H1 (cell line): ENCODE measurements at regions of chr3 and their contacts with region 1.

Region 1: DNA sequence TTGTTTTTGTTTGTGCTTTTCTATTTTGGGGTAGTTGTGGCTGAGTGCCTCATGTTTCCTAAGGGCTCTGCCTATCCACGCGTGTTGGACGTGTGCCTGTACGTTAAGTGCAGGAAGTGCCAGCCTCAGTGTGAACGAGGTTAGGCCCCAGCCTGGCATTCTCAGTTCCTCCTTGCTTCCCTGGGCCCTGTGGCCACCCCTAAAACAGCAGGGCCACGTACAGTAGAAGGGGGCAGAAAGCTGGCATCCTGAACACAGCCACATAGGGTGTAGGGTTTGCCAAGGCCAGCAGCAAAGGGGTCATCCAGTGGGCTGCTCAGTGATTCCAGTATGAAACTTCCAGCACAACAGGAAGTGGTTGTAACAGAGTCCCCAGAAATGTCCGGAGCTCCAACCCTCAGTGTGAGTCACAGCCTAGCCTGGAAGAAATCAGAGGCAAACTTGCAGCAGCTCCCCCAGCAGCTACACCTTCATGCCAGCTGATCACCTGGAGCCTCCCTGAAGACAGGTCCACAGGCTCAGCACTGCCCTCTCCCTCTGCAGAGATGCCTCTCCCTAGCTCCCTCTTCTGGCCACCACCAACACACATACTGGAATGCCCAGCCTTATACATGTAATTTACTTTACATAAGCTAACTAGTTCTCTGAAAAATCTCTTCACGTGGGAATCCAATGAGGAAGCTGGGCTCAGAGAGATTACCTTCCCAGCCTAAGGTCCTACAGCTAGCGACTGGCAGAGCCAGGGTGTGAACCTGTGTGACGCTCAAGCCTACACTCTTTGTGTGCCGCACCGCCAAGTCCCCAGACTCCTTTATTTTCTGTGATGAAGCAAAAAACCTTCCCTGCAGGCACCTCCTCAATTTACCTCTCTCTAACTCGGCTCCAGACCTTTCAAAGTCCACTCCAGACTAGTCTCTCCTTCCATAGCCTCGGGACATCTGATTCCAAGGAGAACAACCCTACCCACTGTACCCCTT is 26.6 kb downstream of the ILDR1 start:
- DNase-seq: peak; percentile 53 to 70
- H3K4me3 ChIP-seq: no peak overlapping the region
- H3K27ac ChIP-seq: no peak overlapping the region
- H3K4me1 ChIP-seq: peaks cover 0 to 8% (median 3%) of the 10 kb centered on the region in 4 experiments; a peak in 4 of 7 replicates
- H3K27me3 ChIP-seq: no peaks in the 10 kb centered on the region
- CTCF ChIP-seq: peak; percentile 79 to 94 (median 92)
- EP300 ChIP-seq: no peak
- POLR2A ChIP-seq: no peak
- RAD21 ChIP-seq: peak; percentile 84 to 87

Region 2: GRCh38 chr3:121545574-121546455 is 449.6 kb before region 1 on chr3 and contains the start of gene POLQ:
- CTCF ChIA-PET with region 1: interaction called, 13 read pairs
- POLR2A ChIA-PET with region 1: no interaction called
- DNase-seq: peak; percentile 49 to 85
- H3K4me3 ChIP-seq: peak within 1 kb of the TSS; percentile 86 to 98 (median 94)
- H3K27ac ChIP-seq: peak within 1 kb of the TSS; percentile 55
- H3K4me1 ChIP-seq: 0 out of 7 replicates have a peak, but pooled peaks cover 0 to 2% (median 0%) of the 10 kb centered on the region in 4 experiments
- H3K27me3 ChIP-seq: no peaks in the 10 kb centered on the region
- CTCF ChIP-seq: no peak
- EP300 ChIP-seq: no peak
- POLR2A ChIP-seq: peak; percentile 66 to 88
- RAD21 ChIP-seq: no peak
- total RNA-seq, gene POLQ: 15.3 and 16.1 TPM in 2 replicates

Region 3: GRCh38 chr3:121883507-121883906 is 111.9 kb before region 1 on chr3:
- CTCF ChIA-PET with region 1: interaction called, 22 read pairs
- POLR2A ChIA-PET with region 1: no interaction called
- DNase-seq: no peak
- H3K4me3 ChIP-seq: no peak overlapping the region
- H3K27ac ChIP-seq: no peak overlapping the region
- H3K4me1 ChIP-seq: no peaks in the 10 kb centered on the region
- H3K27me3 ChIP-seq: no peaks in the 10 kb centered on the region
- CTCF ChIP-seq: peak in 2 of 3 experiments; percentile 32 to 43; a peak in 2 of 4 replicates
- EP300 ChIP-seq: no peak
- POLR2A ChIP-seq: no peak
- RAD21 ChIP-seq: peak; percentile 48 to 66

Region 4: DNA sequence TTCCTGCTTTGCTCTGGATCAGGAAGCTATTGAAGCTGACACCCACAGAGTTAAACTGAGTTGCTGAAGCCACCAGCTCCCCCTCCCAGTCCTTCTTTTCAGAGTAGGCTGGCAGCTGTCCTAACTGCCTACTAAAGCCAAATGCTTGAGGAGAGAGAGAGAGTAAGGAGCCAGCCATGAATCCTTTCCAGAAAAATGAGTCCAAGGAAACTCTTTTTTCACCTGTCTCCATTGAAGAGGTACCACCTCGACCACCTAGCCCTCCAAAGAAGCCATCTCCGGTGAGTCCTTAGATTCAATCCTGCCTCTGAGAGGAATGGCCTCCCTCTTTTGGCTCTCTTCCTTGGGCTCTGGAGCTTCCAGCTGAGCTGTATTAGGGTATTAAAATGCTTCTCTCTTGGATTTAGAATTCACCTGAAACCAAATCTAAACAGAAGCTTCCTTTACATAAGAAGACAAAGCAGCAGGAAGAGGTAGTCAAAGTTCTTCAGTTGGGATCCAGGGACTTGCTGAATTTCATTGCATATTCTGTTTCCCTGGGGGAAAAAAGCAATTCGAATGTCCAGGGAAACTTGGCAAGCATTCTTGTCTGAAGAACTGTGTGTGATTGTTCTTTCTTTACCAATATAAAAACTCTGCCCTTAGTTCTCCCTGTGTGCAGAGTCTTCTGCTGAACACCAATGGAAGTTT is 101.0 kb before region 1 on chr3 and contains the start of gene SLC15A2:
- CTCF ChIA-PET with region 1: interaction called, 17 read pairs
- POLR2A ChIA-PET with region 1: interaction called, 3 read pairs
- DNase-seq: peak in 1 of 2 experiments; percentile 10
- H3K4me3 ChIP-seq: peak within 1 kb of the TSS; percentile 18 to 48 (median 23); a peak in 7 of 8 replicates
- H3K27ac ChIP-seq: peak within 1 kb of the TSS; percentile 81
- H3K4me1 ChIP-seq: peaks cover 0 to 16% (median 8%) of the 10 kb centered on the region in 4 experiments; a peak in 5 of 7 replicates
- H3K27me3 ChIP-seq: no peaks in the 10 kb centered on the region; a peak in 1 of 7 replicates
- CTCF ChIP-seq: no peak
- EP300 ChIP-seq: peak in 1 of 2 experiments; percentile 44; a peak in 1 of 3 replicates
- POLR2A ChIP-seq: peak in 1 of 2 experiments; percentile 64; a peak in 2 of 3 replicates
- RAD21 ChIP-seq: no peak
- total RNA-seq, gene SLC15A2: 1.8 and 2.0 TPM in 2 replicates